ENCODE measurements at regions of chr12 and their contacts with region 1.

Region 1: DNA sequence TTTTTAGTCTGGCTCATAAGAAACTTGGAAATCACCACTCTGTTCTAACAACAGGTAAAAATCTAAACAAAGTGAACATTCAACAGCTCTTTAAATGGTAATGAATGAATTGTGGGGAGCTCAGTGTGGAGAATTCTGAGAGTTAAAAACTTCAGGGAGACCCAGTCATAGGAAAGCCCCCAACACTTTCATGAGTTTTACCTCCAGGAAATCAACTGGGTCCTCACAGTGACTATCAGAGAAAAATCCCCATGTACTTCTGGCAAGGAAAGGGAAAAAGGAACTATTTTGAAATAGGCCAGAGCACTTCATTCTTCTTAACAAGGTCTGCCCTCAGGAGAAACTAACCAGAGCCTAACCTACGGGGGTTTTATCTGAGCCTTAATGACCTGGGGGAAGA is 134.7 kb downstream of the CMAS start:
- DNase-seq: no peak
- H3K4me3 ChIP-seq: no peak overlapping the region
- H3K27ac ChIP-seq: no peak overlapping the region
- H3K4me1 ChIP-seq: no peaks in the 10 kb centered on the region
- H3K27me3 ChIP-seq: no peaks in the 10 kb centered on the region
- CTCF ChIP-seq: no peak
- POLR2A ChIP-seq: no peak

Region 2: DNA sequence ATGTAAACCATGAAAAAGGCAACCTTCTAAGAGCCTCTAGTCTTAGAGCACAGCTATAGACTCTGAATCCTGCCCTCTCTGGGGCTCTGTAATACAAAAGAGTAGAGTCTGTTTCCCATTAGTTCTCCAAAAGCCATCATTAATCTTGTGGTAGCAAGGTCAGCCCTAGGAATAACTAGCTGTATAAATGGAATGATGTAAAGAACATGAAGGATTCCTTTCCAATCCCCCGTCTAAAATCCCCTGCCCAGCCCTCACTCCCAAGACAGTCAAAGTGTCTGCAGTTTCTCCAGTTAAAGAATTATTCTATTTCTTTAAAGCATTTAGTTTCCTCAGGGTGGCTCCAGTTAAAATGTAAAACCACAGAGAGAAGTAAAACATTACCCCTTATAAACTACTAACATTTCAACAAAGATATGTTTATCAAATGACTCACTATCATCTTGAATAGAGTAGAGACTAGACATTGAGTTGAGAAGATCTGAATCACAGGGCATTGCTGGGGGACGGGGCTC is 49.6 kb after region 1 on chr12:
- intact Hi-C with region 1: loop called (anchors 2 kb)
- DNase-seq: no peak
- H3K4me3 ChIP-seq: no peak overlapping the region
- H3K27ac ChIP-seq: no peak overlapping the region
- H3K4me1 ChIP-seq: no peaks in the 10 kb centered on the region
- H3K27me3 ChIP-seq: no peaks in the 10 kb centered on the region
- CTCF ChIP-seq: no peak
- POLR2A ChIP-seq: no peak